GM10248 (cell line): ENCODE measurements at regions of chr2 and their contacts with region 1.

Region 1: GRCh38 chr2:213104092-213104902 is 47.1 kb downstream of the IKZF2 start:
- DNase-seq: no peak
- CTCF ChIP-seq: no peak

Region 2: DNA sequence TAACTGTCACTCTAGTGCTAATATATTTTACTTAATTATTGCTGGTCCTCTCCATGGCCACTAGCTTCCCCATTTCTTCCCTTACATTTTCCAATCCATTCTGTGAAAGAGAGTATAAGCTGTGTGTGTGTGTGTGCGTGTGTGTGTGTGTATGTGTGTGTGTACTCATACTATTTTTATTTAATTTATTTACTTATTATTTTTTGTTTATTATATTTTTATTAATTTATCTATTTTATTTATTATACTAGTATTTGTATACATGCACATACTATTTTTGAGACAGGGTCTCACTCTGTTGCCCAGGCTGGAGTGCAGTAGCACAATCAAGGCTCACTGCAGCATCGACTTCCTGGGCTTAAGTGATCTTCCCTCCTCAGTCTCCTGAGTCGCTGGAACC is 12.5 kb before region 1 on chr2:
- CTCF ChIA-PET with region 1: interaction called, 15 read pairs
- POLR2A ChIA-PET with region 1: no interaction called
- DNase-seq: no peak
- CTCF ChIP-seq: no peak